Right ventricle myocardium superior (tissue), 1 donor: ENCODE measurements at regions of chr16 and their contacts with region 1.

Region 1: DNA sequence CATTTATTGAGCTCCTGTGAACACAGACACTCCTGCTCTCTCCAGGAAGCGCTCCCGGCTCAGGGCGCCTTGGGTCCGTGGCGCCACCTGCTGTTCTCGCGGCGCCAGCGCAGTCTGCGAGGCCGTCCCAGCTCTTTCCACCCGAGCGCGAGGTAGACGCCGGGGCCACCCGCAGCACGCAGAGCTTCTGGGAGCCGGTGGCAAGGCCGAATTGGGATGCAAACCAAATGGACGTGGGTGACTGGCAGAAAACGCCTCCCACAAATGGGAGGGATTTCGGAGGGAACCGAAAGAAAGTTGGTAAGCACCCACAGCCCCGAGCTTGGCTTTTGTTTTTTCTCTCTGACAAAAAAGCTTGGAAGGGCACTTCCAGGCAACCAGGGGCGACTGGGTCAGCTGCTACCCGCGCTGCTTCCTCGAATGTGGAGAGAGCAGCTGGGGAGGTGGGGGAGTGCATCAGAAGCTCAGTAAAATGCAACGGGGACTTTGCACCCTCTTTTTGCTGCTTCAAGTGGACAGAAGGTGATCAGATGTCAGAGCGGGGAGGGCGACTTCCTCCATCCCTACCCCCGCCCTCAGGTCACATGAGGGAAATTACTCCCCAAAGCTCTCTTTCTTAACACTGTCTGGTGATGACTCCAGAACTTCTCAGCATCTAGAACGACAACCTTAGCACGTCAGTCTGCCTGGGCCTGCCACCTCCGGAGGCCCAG is 13.5 kb upstream of the N4BP1 start:
- DNase-seq: peak; percentile 92
- ATAC-seq: peak; percentile 98

Region 2: DNA sequence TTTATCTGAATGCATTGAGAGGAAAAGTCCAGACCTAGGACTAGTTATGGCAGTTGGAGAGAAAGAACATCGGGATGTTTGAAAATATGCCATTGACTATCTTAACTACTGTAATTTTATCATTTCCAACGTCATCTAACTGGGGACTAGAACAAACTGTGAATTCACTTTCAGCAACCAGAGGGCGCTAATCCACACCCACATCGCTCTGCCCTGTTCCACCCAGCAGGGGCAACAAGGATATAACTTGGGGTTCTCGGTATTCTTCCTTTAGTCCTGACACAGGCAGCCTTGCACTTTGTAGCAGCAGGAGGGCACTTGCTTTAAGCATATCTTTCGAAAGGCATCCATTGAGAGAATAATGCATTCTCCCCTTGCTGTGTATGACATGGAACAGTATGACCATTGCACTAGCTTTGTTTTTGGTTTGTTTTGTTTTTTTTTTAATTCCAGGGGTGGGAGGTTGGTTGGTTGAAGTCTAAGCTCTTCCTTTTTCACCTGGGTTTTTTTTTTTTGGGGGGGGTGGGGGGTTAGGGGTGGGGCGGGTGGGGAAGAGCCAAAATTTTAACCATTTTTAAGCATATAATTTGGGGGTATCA is 269.8 kb before region 1 on chr16:
- intact Hi-C with region 1: loop called (anchors 5 kb)
- DNase-seq: peak; percentile 55
- ATAC-seq: peak; percentile 83

Region 3: DNA sequence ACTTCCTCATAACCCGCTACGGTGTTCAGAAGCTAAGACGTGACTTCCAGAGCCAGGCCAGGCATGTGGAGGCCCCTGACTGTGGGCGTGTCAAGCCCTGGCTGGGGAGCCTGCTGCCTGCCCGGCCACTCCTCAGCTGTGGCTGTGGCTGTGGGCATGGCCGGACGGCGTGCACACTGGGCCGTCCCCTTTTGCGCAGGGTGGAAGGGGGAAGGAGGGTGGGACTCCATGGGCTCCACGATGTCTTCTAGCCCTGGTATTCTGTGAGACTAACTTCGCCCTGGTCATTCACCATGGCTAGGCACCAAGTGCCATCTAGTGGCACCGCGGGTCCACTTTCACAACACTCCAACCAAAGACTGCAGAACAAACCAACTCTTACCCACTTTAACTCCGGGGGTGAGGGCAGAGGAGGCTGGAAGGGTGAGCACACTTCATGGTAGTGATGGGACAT is 81.4 kb before region 1 on chr16:
- intact Hi-C with region 1: loop called (anchors 5 kb)
- DNase-seq: peak; percentile 71
- ATAC-seq: peak; percentile 71